ENCODE measurements at regions of chr4 and their contacts with region 1.

Region 1: DNA sequence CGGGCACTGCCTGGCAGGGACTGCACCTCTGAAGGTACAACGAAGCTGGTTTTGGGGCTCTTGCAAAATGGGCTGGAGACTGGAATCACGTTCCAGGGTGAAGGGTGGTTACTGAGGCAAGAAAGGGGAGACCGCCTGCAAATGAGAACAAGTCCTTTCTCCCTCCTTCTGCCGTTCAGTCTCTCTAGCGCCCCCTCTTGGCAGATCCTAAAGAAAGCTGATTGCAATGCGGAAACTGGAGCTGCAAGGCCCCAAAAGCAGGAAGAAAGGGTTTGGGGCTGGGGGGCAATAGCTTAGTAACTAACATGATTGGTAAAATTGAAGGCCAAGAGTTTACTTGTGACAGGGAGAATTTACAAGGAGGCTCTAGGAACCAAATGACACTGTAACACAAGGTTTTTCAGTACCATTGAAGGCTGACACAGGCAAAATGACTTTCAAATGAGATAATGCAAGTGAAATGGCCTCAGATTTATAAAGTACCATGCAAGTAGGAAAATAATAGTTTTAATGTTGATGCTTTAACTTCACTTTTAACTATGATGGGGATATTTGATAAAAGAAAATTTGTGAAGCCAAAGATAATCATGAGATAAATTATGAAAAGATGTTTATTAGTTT is 222.7 kb upstream of the HAND2 start:
- DNase-seq: no peak
- H3K4me3 ChIP-seq: no peak overlapping the region
- H3K27ac ChIP-seq: peak overlapping the region in 1 of 2 experiments; percentile 94; a peak in 2 of 4 replicates
- H3K4me1 ChIP-seq: peaks cover 0 to 13% of the 10 kb centered on the region in 2 experiments; a peak in 2 of 4 replicates
- H3K27me3 ChIP-seq: no peaks in the 10 kb centered on the region
- CTCF ChIP-seq: peak; percentile 59
- EP300 ChIP-seq: no peak
- RAD21 ChIP-seq: peak; percentile 32

Region 2: GRCh38 chr4:173766171-173766600 is 13.5 kb after region 1 on chr4:
- CTCF ChIA-PET with region 1: interaction called, 16 read pairs
- POLR2A ChIA-PET with region 1: interaction called, 4 read pairs
- DNase-seq: peak; percentile 67
- H3K4me3 ChIP-seq: no peak overlapping the region
- H3K27ac ChIP-seq: peak overlapping the region in 1 of 2 experiments; percentile 100; a peak in 2 of 4 replicates
- H3K4me1 ChIP-seq: peaks cover 0 to 45% of the 10 kb centered on the region in 2 experiments; a peak in 2 of 4 replicates
- H3K27me3 ChIP-seq: no peaks in the 10 kb centered on the region
- CTCF ChIP-seq: no peak
- EP300 ChIP-seq: peak; percentile 29 to 100; a peak in 2 of 4 replicates
- RAD21 ChIP-seq: peak; percentile 53